Activated naive CD4-positive, alpha-beta T cell treated with anti-CD3 and anti-CD28 coated beads for 36 hours (primary cell): ENCODE measurements at regions of chr15 and their contacts with region 1.

Region 1: DNA sequence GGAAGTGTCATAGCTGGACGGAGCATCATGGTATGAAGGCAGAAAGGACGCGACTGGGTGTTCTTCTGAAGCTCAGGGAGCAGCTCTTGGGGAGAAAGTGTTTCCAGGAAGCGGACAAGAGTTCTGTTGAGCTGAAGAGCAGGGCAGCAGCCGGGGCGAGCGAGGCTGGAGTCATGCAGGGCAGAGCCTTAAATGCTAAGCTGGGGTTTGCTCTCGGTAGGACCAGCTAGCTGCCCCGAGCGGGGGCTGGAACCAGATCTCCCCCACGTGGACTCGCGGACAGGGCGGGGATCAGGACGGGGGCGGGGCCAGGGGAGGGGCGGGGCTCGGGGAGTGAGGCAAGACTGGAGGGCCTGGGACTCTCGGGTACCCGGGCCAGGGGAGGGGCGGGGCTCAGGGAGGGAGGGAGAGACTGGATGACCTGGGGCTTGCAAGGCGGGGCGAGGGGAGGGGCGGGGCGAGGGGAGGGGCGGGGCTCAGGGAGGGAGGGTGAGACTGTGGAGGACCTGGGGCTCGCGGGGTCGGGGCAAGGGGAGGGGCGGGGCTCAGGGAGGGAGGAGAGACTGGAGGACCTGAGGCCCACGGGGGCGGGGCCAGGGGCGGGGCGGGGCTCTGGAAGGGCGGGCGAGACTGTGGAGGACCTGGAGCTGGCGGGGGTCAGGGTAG is 486 bp upstream of the FAH start:
- DNase-seq: peak; percentile 96
- H3K4me3 Mint-ChIP-seq: peak overlapping the region; percentile 87
- H3K27ac Mint-ChIP-seq: peak overlapping the region; percentile 36
- H3K4me1 Mint-ChIP-seq: peaks cover 19% of the 10 kb centered on the region
- H3K27me3 Mint-ChIP-seq: no peaks in the 10 kb centered on the region

Region 2: GRCh38 chr15:79310983-79311900 is 841.1 kb before region 1 on chr15 and contains the start of gene TMED3:
- CTCF ChIA-PET with region 1: no interaction called
- intact Hi-C with region 1: loop called (anchors 10 kb)
- DNase-seq: peak; percentile 85
- H3K4me3 Mint-ChIP-seq: peak within 1 kb of the TSS; percentile 85
- H3K27ac Mint-ChIP-seq: no peak within 1 kb of the TSS
- H3K4me1 Mint-ChIP-seq: peaks cover 35% of the 10 kb centered on the region
- H3K27me3 Mint-ChIP-seq: peaks cover 14% of the 10 kb centered on the region
- total RNA-seq, gene TMED3: 37.6 to 37.9 TPM

Region 3: DNA sequence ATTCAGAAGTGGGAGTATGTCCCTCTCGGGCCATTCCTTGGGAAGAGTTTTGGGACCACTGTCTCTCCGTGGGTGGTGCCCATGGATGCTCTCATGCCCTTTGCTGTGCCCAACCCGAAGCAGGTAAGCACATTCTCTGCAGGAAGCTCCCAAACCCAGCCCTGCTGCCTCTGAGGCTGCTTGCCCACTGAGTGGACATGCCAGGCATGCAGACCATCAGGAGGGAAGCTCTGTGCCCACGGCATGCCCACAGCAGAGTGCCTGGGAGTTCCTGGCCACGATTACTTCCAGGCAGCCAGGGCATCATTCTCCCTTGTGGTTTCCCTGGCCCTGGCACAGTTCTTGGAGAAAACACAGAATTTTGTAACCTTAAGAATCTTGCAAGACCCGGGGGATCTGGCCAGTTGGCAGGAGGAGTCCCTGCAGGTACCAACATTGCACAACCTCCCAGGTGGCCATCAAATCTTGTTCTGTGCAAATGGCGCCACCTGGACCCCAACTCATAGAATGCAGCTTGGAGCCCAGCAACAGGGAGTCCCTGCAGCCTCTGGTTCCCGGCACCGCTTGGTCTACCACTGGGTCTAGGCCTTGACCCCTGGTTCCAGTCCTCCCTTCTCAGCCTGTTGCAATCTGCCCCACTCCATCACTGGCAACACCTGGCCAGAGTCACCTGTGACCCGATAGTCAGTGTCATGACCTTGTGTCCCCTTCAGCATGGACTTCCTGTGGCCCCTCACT is 20.9 kb after region 1 on chr15:
- CTCF ChIA-PET with region 1: no interaction called
- intact Hi-C with region 1: loop called (anchors 2 kb)
- DNase-seq: peak; percentile 89
- H3K4me3 Mint-ChIP-seq: no peak overlapping the region
- H3K27ac Mint-ChIP-seq: no peak overlapping the region
- H3K4me1 Mint-ChIP-seq: no peaks in the 10 kb centered on the region
- H3K27me3 Mint-ChIP-seq: no peaks in the 10 kb centered on the region

Region 4: DNA sequence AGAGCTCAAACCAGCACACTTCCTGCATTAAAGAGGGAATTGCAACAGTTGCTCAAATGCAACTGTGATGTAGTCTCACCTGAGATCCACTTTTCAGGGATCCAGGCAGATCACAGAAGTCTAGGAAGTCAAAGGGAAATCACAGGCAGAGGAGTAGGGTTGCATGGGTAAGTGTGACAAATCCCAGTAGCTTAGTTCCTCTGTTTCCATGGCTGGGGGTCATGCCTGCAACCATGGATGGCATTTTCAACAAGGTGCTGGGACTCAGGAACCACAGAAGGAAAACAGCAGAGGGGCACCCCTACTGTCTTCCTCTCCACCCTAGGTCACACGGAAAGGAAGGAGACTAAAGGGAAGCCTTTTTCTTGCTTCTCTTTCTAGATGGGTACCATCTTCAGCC is 215.3 kb after region 1 on chr15:
- CTCF ChIA-PET with region 1: no interaction called
- intact Hi-C with region 1: no loop called
- DNase-seq: no peak
- H3K4me3 Mint-ChIP-seq: no peak overlapping the region
- H3K27ac Mint-ChIP-seq: no peak overlapping the region
- H3K4me1 Mint-ChIP-seq: no peaks in the 10 kb centered on the region
- H3K27me3 Mint-ChIP-seq: peaks cover 1% of the 10 kb centered on the region